Thyroid gland (tissue), 4 donors: ENCODE measurements at regions of chr16 and their contacts with region 1.

Region 1: DNA sequence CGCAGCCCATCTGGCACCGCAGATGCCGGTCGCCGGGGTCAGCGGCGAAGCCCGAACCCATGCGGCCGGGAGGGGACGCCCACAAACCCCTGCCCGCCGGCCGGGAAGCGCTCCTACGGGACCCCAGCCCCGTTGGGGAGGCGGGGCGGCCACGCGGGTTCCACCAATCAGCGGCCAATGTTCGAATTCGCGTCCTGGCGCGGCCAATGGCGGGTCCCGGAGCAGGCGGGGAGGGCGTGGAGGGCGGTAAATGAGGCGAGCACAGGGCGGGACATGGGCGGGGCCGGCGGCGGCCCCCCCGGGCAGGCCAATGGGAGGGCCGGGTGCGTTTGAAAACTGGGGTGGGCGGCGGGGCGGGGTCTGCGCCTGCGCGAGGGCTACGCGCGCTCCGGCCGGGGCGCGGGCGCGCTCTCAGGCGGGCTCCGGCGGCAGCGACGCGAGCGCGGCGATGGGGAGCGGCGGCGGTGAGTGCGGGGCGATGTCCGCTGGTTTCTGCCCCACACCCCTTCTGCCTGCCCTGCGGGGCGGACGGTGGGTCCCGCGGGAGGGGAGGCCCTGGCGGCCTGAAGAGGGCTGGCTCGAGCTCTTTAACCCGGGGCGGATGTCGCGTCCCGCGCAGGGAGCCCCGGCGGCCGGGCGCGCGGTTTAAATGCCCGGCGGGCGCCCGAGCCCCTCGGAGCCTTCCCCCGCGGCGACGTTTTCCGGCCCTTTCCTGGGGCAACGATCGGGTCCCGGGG is at the start of gene CCNF:
- DNase-seq: peak; percentile 97
- H3K4me3 ChIP-seq: peak within 1 kb of the TSS; percentile 33 to 86 (median 49)
- H3K27ac ChIP-seq: peak within 1 kb of the TSS in 2 of 3 donors; percentile 5 to 42
- H3K4me1 ChIP-seq: peaks cover 6 to 18% of the 10 kb centered on the region in 2 donors
- H3K27me3 ChIP-seq: no peaks in the 10 kb centered on the region
- CTCF ChIP-seq: peak in 3 of 6 experiments; percentile 16 to 23 (median 19)
- POLR2A ChIP-seq: peak; percentile 41 to 57
- total RNA-seq, gene CCNF: 1.2 to 2.5 (median 1.8) TPM

Region 2: DNA sequence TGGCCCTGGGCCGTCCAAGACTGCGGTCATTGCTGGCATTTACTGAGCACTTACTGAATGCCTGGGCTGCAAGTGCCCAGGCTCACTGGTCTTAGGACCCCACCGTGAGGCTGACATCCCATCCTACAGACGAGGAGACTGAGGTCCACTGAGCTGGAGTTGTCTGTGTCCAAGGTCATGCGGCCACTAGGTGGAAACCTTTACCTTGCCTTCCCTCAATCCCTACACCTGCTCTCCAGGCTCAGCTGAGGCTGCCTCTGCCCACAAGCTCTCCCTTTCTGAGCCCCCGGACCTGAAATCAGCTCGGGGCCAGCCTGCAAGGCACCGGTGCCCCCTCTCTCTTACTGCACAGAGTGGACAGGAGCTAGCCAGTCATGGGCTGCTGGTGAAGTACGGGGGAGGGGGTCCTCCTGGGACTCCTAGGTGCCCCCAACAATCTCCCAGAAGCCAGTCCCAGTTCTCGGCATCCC is 234.3 kb before region 1 on chr16:
- intact Hi-C with region 1: loop called (anchors 10 kb)
- DNase-seq: peak; percentile 66 to 69
- H3K4me3 ChIP-seq: no peak overlapping the region
- H3K27ac ChIP-seq: no peak overlapping the region
- H3K4me1 ChIP-seq: peaks cover 10 to 13% of the 10 kb centered on the region in 2 donors
- H3K27me3 ChIP-seq: no peaks in the 10 kb centered on the region
- CTCF ChIP-seq: peak; percentile 34 to 80 (median 64)
- POLR2A ChIP-seq: no peak

Region 3: DNA sequence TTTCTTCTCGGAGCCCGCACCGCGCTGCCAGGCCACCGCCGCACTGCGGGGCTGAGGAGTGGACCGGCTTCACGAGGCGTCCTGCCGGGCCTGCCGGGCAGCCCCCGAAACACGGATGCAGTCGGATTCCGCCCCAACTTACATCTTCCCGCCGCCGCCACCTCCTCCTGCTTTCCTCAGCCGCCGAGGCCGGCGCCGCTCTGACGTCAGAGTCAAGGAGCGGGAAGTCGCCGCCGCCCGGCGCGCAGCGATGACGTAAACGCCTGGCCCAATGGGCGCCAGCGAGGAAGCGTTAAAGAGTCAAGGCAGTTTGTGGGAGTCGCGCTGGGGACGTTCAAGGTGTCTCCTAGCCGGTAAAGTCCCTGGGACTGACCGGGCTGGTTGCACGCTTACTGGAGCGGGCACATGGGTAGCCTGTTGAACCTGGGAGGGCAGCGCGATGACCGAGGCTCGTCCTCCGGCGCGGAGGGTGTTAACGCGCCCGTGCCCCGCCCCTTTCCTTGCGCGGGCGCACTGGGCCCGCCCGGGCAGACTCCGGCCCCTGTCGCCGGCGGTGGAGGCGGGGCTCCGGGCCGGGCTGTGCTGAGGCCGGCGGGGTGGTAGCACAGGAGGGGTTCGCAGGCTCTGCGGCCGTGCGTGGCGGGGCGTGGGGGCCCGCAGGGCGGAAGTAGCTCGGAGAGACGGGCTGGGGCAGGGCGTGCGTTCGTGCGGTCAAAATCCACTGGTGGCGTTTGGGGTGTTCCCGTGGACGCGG is 161.1 kb before region 1 on chr16 and contains the start of gene RNPS1:
- intact Hi-C with region 1: loop called (anchors 10 kb)
- DNase-seq: peak; percentile 94 to 95
- H3K4me3 ChIP-seq: peak within 1 kb of the TSS; percentile 30 to 85 (median 51)
- H3K27ac ChIP-seq: peak within 1 kb of the TSS; percentile 88 to 97 (median 95)
- H3K4me1 ChIP-seq: peaks cover 11 to 16% of the 10 kb centered on the region in 2 donors
- H3K27me3 ChIP-seq: no peaks in the 10 kb centered on the region
- CTCF ChIP-seq: peak in 1 of 6 experiments; percentile 41
- POLR2A ChIP-seq: peak; percentile 86 to 91
- total RNA-seq, gene RNPS1: 127 to 158 (median 141) TPM

Region 4: GRCh38 chr16:2296661-2297505 is 132.3 kb before region 1 on chr16:
- intact Hi-C with region 1: loop called (anchors 10 kb)
- DNase-seq: peak; percentile 73 to 80
- H3K4me3 ChIP-seq: no peak overlapping the region
- H3K27ac ChIP-seq: peak overlapping the region in 1 of 3 donors; percentile 17
- H3K4me1 ChIP-seq: peaks cover 5 to 7% of the 10 kb centered on the region in 2 donors
- H3K27me3 ChIP-seq: no peaks in the 10 kb centered on the region
- CTCF ChIP-seq: peak; percentile 22 to 89 (median 62)
- POLR2A ChIP-seq: no peak

Region 5: DNA sequence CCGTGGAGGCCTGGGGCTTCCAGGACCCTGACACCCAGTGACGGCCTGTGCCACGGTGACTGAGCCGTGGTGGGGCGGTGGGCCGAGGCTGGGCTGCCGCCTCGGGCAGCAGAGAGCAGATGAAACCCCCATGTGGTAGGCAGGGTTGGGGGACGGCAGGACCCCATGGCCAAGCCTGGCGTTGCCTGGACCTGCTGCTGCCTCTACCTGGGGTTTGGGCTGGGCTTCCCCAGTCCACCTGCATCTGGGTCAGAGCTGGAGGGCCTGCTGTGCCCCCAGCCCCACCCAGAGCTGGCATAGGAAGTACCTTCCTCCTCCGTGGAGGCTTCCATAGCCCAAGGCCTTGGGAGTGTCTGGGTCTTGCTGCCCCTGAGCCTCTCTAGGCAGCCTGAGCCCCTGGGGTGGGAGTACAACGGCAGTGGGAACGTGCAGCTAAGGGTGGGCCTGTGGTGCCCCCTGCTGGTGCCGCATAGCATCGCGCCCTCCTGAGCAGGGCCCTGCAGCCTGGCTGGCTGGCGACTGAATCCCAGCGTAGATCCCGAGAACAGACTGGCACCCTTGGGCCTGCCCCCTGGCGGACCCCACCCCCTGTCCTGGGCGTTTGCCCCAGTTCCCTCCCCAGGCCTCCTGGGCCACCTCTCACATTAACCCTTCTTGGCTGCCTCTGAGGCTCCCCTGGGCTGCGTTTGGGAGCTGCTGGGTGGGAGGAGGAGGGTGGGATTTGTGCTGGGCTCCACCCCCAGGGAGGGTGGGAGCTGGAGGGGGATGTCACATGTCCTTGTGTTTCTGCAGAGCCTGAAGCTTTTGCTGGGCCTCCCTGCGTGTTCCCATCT is 71.9 kb after region 1 on chr16:
- intact Hi-C with region 1: loop called (anchors 5 kb)
- DNase-seq: peak; percentile 86 to 88
- H3K4me3 ChIP-seq: no peak overlapping the region
- H3K27ac ChIP-seq: peak overlapping the region in 2 of 3 donors; percentile 12 to 90
- H3K4me1 ChIP-seq: peaks cover 43 to 61% of the 10 kb centered on the region in 2 donors
- H3K27me3 ChIP-seq: no peaks in the 10 kb centered on the region
- CTCF ChIP-seq: peak; percentile 96 to 99 (median 98)
- POLR2A ChIP-seq: peak in 1 of 2 donors; percentile 5